ENCODE measurements at regions of chr17 and their contacts with region 1.

Region 1: GRCh38 chr17:77011173-77012011 is 129.4 kb upstream of the SEC14L1 start:
- DNase-seq: peak in 2 of 4 experiments; percentile 36 to 69
- ATAC-seq: peak; percentile 49; the same call in 1 of the 3 replicates
- H3K4me3 ChIP-seq: no peak overlapping the region
- H3K27ac ChIP-seq: no peak overlapping the region
- H3K4me1 ChIP-seq: no peaks in the 10 kb centered on the region
- H3K27me3 ChIP-seq: peaks cover 3 to 10% of the 10 kb centered on the region in 2 experiments; a peak in 3 of 5 replicates
- CTCF ChIP-seq: peak; percentile 65 to 81 (median 73)
- EP300 ChIP-seq: no peak
- POLR2A ChIP-seq: no peak
- RAD21 ChIP-seq: peak; percentile 32 to 77

Region 2: DNA sequence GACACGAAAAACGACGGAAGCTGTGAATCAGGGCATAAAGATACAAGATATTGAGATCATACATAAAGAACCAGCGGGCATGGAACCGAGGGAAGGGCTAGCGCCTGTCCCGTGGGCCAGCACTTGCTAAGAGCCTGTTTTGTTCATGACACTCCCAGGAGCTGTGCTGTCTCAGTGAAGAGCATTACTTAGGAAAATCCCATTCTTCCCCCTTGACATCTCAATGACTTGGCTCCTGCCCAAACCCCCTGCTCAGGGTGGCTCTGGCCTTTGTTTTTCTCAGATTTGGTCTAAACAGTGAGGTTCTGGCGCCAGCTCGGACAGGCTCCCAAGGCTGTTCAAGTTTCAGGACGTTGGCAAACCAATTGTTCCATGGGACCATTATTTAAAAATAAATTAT is 50.3 kb after region 1 on chr17:
- CTCF ChIA-PET with region 1: no interaction called
- POLR2A ChIA-PET with region 1: interaction called, 4 read pairs
- in situ Hi-C with region 1: no loop called
- intact Hi-C with region 1: loop called (anchors 10 kb)
- DNase-seq: no peak
- ATAC-seq: no peak
- H3K4me3 ChIP-seq: no peak overlapping the region
- H3K27ac ChIP-seq: no peak overlapping the region
- H3K4me1 ChIP-seq: no peaks in the 10 kb centered on the region; a peak in 1 of 5 replicates
- H3K27me3 ChIP-seq: peaks cover 17 to 36% of the 10 kb centered on the region in 2 experiments; a peak in 4 of 5 replicates
- CTCF ChIP-seq: no peak
- EP300 ChIP-seq: no peak
- POLR2A ChIP-seq: no peak
- RAD21 ChIP-seq: no peak

Region 3: DNA sequence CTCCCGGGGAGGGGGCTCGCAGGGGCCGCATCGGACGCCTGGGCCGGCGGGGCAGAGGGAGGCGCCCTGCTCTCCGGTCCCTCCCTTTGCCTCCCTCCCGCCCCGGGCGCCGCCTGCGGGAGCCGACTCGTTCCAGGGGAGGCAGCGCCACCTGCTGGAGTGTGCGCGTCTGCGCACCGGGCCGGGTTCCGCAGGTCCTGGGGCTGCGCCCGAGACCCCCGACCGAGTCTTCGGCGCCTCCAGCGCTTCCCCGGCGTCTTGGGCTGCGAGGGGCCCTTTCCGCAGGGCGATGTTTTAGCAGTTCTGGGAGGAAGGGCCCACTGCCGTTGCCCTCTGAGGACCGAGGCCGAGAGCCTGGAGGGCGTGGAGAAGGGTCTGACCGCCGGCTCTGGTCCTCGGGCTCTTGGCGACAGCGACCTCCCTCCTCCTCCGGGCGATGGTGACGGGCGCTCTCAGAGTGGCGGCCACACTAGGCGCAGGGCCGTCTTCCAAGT is 235.7 kb after region 1 on chr17:
- CTCF ChIA-PET with region 1: interaction called, 6 read pairs
- POLR2A ChIA-PET with region 1: no interaction called
- in situ Hi-C with region 1: loop called (anchors 10 kb)
- intact Hi-C with region 1: loop called (anchors 2 kb)
- DNase-seq: peak; percentile 88 to 93 (median 91)
- ATAC-seq: peak; percentile 98
- H3K4me3 ChIP-seq: peak overlapping the region; percentile 41
- H3K27ac ChIP-seq: no peak overlapping the region
- H3K4me1 ChIP-seq: peaks cover 0 to 19% of the 10 kb centered on the region in 2 experiments; a peak in 2 of 5 replicates
- H3K27me3 ChIP-seq: peaks cover 12 to 25% of the 10 kb centered on the region in 2 experiments; a peak in 4 of 5 replicates
- CTCF ChIP-seq: peak; percentile 79 to 92 (median 86)
- EP300 ChIP-seq: no peak
- POLR2A ChIP-seq: no peak
- RAD21 ChIP-seq: peak; percentile 95 to 97

Measured in K562 (cell line).